ENCODE measurements at regions of chr17 and their contacts with region 1.

Region 1: DNA sequence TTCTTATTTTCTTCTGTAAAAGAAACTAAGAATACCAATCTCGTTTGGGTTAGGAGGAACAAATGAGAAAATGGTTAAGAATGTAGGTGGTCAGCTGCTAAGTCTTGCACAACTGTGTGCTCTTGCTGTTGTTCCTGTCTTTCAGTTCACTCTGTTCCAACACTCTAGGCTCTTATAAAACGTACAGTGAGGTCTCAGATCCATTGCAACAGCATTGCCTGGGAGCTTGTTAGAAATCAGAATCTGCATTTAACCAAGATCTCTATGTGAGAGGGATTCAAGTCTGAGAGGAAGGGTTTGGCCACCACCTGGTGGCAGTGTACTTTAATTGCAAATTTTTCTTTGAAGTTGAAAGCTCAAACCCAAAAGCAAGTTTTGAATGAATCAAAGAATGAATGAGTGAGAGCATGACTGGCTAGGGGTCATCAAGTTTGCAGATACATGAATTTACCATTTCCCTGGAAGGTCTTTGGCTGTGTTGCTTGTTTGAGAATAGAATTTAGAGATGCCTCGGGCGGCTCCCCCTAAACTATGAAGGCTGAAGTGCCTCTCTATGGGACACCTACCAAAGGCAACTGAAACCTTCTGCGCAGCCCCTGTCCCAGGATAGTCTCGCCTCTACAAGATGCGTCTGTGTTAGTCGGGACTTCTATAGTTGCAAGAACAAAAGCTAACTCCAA is 2.5 kb downstream of the ALOX15B start:
- DNase-seq: no peak

Region 2: DNA sequence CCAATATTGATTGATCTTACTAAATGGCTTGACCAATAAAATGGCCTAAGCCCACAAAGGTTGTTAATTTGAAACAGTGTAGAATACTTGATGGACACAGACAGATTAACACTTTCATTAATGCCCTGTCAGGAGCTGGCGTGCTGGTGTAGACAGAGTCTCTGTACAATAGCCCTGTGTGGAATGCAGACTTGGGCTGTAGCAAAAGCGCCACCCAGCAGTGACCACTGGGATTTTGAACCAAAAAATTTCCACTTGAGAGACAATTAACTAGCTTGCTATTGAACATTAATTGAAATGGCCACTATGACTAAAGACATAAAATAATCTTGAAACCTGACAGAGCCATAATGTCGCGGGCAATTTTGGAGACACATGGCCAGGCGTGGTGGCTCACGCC is 58.7 kb before region 1 on chr17:
- intact Hi-C with region 1: loop called in 1 of 2 experiments (anchors 1 kb)
- DNase-seq: no peak

Region 3: GRCh38 chr17:8060274-8060673 is 18.9 kb after region 1 on chr17:
- intact Hi-C with region 1: no loop called
- DNase-seq: peak; percentile 76

Region 4: DNA sequence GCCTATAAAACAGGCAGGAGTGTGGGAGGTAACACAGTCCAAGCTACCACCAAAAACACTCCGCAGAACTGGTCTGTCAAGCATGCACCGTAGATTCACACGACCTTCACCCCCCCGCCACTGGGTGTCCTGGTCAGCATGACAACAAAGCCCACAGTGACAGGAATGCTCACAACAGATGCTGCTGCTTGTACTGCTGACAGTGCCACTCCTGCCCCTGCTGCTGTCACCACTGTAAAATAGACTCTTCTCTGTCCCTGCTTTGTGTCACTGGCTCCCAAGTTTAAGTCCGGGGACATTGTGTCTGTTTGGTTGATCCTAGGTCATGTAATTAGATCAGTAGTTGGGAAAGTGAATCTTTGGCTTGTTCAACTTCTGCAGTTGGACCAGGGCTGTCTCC is 291.3 kb after region 1 on chr17:
- intact Hi-C with region 1: no loop called
- DNase-seq: no peak

Measured in posterior vena cava (tissue), 2 donors.